Activated naive CD4-positive, alpha-beta T cell treated with anti-CD3 and anti-CD28 coated beads for 36 hours (primary cell): ENCODE measurements at regions of chr6 and their contacts with region 1.

Region 1: DNA sequence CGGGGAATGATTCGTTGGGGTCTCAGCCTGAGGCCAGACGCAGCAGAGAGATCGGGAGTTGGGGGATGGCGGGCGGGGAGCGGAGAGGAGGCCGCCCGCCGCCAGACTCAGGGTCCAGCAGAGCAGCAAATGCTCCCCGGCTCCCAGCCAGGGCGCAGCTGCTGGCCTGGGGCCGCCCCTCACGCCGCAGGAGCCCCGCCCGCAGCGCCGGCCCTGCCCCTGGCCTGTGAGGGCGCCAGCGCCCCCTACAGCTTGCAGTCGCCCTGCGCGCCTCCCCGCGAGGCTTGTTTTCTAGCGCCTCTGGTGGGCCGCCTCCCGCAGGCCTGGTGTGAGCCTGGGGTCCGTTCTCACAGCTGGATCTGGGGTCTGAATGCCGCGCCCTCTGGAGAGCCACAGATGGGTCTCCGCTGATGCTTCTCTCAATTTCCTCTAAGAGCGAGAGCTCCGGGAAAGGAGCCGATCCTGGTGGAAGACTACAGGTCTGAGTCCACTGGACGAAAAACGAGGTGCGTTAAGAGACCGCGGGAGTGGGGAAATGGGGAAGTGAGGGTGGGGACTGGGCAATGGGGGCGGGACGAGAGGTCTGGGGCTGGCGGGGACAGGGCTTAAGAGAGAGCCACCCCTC is 29.9 kb downstream of the TRIM38 start:
- DNase-seq: peak; percentile 95
- H3K4me3 Mint-ChIP-seq: peak overlapping the region; percentile 95
- H3K27ac Mint-ChIP-seq: peak overlapping the region; percentile 91
- H3K4me1 Mint-ChIP-seq: peaks cover 24% of the 10 kb centered on the region
- H3K27me3 Mint-ChIP-seq: no peaks in the 10 kb centered on the region

Region 2: GRCh38 chr6:25278914-25279747 is 713.4 kb before region 1 on chr6 and contains the start of gene CARMIL1:
- CTCF ChIA-PET with region 1: no interaction called
- intact Hi-C with region 1: loop called (anchors 10 kb)
- DNase-seq: peak; percentile 76
- H3K4me3 Mint-ChIP-seq: peak within 1 kb of the TSS; percentile 83
- H3K27ac Mint-ChIP-seq: peak within 1 kb of the TSS; percentile 60
- H3K4me1 Mint-ChIP-seq: peaks cover 29% of the 10 kb centered on the region
- H3K27me3 Mint-ChIP-seq: no peaks in the 10 kb centered on the region
- total RNA-seq, gene CARMIL1: 3.9 to 4.0 TPM

Region 3: GRCh38 chr6:25788305-25788922 is 204.1 kb before region 1 on chr6:
- CTCF ChIA-PET with region 1: interaction called, 15 read pairs
- intact Hi-C with region 1: loop called (anchors 1 kb)
- DNase-seq: peak; percentile 73
- H3K4me3 Mint-ChIP-seq: no peak overlapping the region
- H3K27ac Mint-ChIP-seq: no peak overlapping the region
- H3K4me1 Mint-ChIP-seq: no peaks in the 10 kb centered on the region
- H3K27me3 Mint-ChIP-seq: no peaks in the 10 kb centered on the region

Region 4: DNA sequence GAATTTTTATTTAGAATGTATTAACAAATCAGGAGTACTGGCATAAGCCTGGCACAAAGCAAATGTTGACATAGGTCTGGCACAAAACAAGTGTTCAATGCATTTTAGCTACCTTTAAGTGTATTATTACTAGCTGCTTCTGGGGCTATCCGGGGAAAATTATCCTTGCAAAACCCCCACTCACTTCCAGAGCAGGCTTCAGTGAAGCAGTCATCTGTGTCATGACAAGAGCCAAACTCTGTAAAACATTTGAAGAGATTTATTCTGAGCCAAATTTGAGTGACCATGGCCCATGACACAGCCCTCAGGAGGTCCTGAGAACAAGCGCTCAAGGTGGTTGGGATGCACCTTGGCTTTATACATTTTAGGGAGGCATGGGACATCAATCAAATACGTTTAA is 36.3 kb before region 1 on chr6:
- CTCF ChIA-PET with region 1: interaction called, 10 read pairs
- intact Hi-C with region 1: no loop called
- DNase-seq: no peak
- H3K4me3 Mint-ChIP-seq: no peak overlapping the region
- H3K27ac Mint-ChIP-seq: no peak overlapping the region
- H3K4me1 Mint-ChIP-seq: peaks cover 34% of the 10 kb centered on the region
- H3K27me3 Mint-ChIP-seq: no peaks in the 10 kb centered on the region

Region 5: GRCh38 chr6:25975923-25976560 is 16.5 kb before region 1 on chr6:
- CTCF ChIA-PET with region 1: interaction called, 16 read pairs
- intact Hi-C with region 1: loop called (anchors 2 kb)
- DNase-seq: no peak
- H3K4me3 Mint-ChIP-seq: no peak overlapping the region
- H3K27ac Mint-ChIP-seq: peak overlapping the region; percentile 46
- H3K4me1 Mint-ChIP-seq: peaks cover 57% of the 10 kb centered on the region
- H3K27me3 Mint-ChIP-seq: no peaks in the 10 kb centered on the region

Region 6: DNA sequence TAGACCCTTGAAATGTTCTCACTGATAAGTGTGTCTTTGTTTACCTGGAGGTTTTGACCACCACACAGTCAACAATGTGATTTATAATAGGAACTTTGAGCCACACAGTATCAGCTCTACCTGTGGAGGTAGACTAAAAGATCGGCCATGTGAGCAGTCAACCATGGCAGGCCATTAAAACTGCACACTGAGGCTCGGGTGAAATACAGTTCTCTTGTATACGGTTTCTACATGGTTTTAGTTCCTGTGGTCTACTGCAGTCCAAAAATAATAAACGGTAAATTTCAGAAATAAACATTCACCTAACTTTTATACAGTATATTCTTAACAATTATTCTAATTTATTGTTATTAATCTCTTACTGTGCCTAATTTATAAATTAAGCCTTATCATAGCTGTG is 17.3 kb after region 1 on chr6:
- CTCF ChIA-PET with region 1: interaction called, 63 read pairs
- intact Hi-C with region 1: no loop called
- DNase-seq: no peak
- H3K4me3 Mint-ChIP-seq: no peak overlapping the region
- H3K27ac Mint-ChIP-seq: no peak overlapping the region
- H3K4me1 Mint-ChIP-seq: peaks cover 3% of the 10 kb centered on the region
- H3K27me3 Mint-ChIP-seq: no peaks in the 10 kb centered on the region

Region 7: GRCh38 chr6:27119761-27120160 is 1127.2 kb after region 1 on chr6:
- CTCF ChIA-PET with region 1: no interaction called
- intact Hi-C with region 1: no loop called
- DNase-seq: no peak
- H3K4me3 Mint-ChIP-seq: no peak overlapping the region
- H3K27ac Mint-ChIP-seq: no peak overlapping the region
- H3K4me1 Mint-ChIP-seq: peaks cover 7% of the 10 kb centered on the region
- H3K27me3 Mint-ChIP-seq: no peaks in the 10 kb centered on the region